Caco-2 (cell line): ENCODE measurements at regions of chr5 and their contacts with region 1.

Region 1: GRCh38 chr5:73201547-73202513 is 28.8 kb downstream of the TMEM174 start:
- DNase-seq: peak; percentile 87 to 94
- H3K4me3 ChIP-seq: peak overlapping the region; percentile 37
- H3K4me3 Mint-ChIP-seq: peak overlapping the region; percentile 81
- H3K27ac Mint-ChIP-seq: peak overlapping the region; percentile 39
- H3K4me1 ChIP-seq: peaks cover 11% of the 10 kb centered on the region; the same call in 1 of the 2 replicates
- H3K4me1 Mint-ChIP-seq: peaks cover 21% of the 10 kb centered on the region
- H3K27me3 ChIP-seq: no peaks in the 10 kb centered on the region
- H3K27me3 Mint-ChIP-seq: peaks cover 5% of the 10 kb centered on the region
- CTCF ChIP-seq: peak; percentile 94 to 97

Region 2: GRCh38 chr5:72920690-72921502 is 280.9 kb before region 1 on chr5:
- CTCF ChIA-PET with region 1: interaction called, 3 read pairs
- POLR2A ChIA-PET with region 1: no interaction called
- intact Hi-C with region 1: loop called (anchors 5 kb)
- DNase-seq: peak in 1 of 2 experiments; percentile 11
- H3K4me3 ChIP-seq: no peak overlapping the region
- H3K4me3 Mint-ChIP-seq: no peak overlapping the region
- H3K27ac Mint-ChIP-seq: no peak overlapping the region
- H3K4me1 ChIP-seq: no peaks in the 10 kb centered on the region
- H3K4me1 Mint-ChIP-seq: no peaks in the 10 kb centered on the region
- H3K27me3 ChIP-seq: no peaks in the 10 kb centered on the region
- H3K27me3 Mint-ChIP-seq: no peaks in the 10 kb centered on the region
- CTCF ChIP-seq: peak; percentile 25 to 28

Region 3: DNA sequence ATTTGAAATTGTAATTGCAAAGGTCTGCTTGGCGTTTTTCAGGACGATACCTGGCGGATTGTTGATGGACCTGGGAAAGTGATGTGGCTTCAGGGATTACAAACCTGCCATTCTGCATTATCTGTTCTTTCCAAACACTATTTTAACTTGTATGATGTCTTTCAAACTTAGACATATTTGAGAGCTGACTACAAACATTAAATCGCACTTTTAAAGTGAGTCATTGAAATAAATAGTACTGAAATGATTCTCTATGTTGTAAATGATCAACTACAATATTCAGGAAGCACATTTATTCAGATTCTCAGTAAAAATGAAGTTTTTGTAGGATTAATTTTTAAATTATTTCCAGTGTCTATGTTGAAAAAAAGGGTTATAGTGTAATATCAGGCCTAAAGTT is 113.8 kb before region 1 on chr5:
- CTCF ChIA-PET with region 1: interaction called, 22 read pairs
- POLR2A ChIA-PET with region 1: no interaction called
- intact Hi-C with region 1: loop called (anchors 1 kb)
- DNase-seq: no peak
- H3K4me3 ChIP-seq: no peak overlapping the region
- H3K4me3 Mint-ChIP-seq: no peak overlapping the region
- H3K27ac Mint-ChIP-seq: no peak overlapping the region
- H3K4me1 ChIP-seq: no peaks in the 10 kb centered on the region
- H3K4me1 Mint-ChIP-seq: no peaks in the 10 kb centered on the region
- H3K27me3 ChIP-seq: no peaks in the 10 kb centered on the region
- H3K27me3 Mint-ChIP-seq: no peaks in the 10 kb centered on the region
- CTCF ChIP-seq: no peak

Region 4: GRCh38 chr5:73135429-73136054 is 66.3 kb before region 1 on chr5:
- CTCF ChIA-PET with region 1: interaction called, 3 read pairs
- POLR2A ChIA-PET with region 1: no interaction called
- intact Hi-C with region 1: loop called (anchors 5 kb)
- DNase-seq: no peak
- H3K4me3 ChIP-seq: no peak overlapping the region
- H3K4me3 Mint-ChIP-seq: no peak overlapping the region
- H3K27ac Mint-ChIP-seq: no peak overlapping the region
- H3K4me1 ChIP-seq: peaks cover 18% of the 10 kb centered on the region
- H3K4me1 Mint-ChIP-seq: peaks cover 13% of the 10 kb centered on the region
- H3K27me3 ChIP-seq: no peaks in the 10 kb centered on the region
- H3K27me3 Mint-ChIP-seq: peaks cover 3% of the 10 kb centered on the region
- CTCF ChIP-seq: peak; percentile 32 to 54

Region 5: GRCh38 chr5:73189871-73190376 is 11.9 kb before region 1 on chr5:
- CTCF ChIA-PET with region 1: interaction called, 13 read pairs
- POLR2A ChIA-PET with region 1: interaction called, 3 read pairs
- intact Hi-C with region 1: no loop called
- DNase-seq: peak in 1 of 2 experiments; percentile 23
- H3K4me3 ChIP-seq: no peak overlapping the region
- H3K4me3 Mint-ChIP-seq: no peak overlapping the region
- H3K27ac Mint-ChIP-seq: no peak overlapping the region
- H3K4me1 ChIP-seq: peaks cover 10% of the 10 kb centered on the region
- H3K4me1 Mint-ChIP-seq: peaks cover 16% of the 10 kb centered on the region
- H3K27me3 ChIP-seq: no peaks in the 10 kb centered on the region
- H3K27me3 Mint-ChIP-seq: no peaks in the 10 kb centered on the region
- CTCF ChIP-seq: no peak

Region 6: DNA sequence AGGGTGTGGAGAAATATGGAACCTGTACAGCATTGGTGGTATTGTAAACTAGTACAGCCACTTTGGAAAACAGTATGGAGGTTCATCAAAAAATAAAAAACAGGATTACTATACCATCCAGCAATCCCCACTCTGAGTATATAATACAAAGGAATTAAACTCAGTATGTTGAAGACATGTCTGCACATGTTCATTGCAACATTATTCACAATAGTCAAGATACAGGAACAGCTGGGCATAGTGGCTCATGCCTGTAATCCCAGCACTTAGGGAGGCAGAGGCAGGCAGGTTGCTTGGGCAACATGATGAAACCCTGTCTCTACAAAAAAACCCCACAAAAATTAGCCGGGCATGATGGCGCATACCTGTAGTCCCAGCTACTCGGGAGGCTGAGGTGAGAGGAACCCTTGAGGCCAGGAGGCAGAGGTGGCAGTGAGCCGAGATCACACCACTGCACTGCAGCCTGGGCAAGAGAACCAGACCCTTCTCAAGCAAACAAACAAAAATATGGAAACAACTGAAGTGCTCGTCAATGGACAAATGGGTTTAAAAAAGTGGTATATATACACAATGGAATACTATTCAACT is 34.8 kb after region 1 on chr5:
- CTCF ChIA-PET with region 1: no interaction called
- POLR2A ChIA-PET with region 1: no interaction called
- intact Hi-C with region 1: no loop called
- DNase-seq: no peak
- H3K4me3 ChIP-seq: no peak overlapping the region
- H3K4me3 Mint-ChIP-seq: no peak overlapping the region
- H3K27ac Mint-ChIP-seq: no peak overlapping the region
- H3K4me1 ChIP-seq: no peaks in the 10 kb centered on the region
- H3K4me1 Mint-ChIP-seq: no peaks in the 10 kb centered on the region
- H3K27me3 ChIP-seq: no peaks in the 10 kb centered on the region
- H3K27me3 Mint-ChIP-seq: no peaks in the 10 kb centered on the region
- CTCF ChIP-seq: no peak

Region 7: DNA sequence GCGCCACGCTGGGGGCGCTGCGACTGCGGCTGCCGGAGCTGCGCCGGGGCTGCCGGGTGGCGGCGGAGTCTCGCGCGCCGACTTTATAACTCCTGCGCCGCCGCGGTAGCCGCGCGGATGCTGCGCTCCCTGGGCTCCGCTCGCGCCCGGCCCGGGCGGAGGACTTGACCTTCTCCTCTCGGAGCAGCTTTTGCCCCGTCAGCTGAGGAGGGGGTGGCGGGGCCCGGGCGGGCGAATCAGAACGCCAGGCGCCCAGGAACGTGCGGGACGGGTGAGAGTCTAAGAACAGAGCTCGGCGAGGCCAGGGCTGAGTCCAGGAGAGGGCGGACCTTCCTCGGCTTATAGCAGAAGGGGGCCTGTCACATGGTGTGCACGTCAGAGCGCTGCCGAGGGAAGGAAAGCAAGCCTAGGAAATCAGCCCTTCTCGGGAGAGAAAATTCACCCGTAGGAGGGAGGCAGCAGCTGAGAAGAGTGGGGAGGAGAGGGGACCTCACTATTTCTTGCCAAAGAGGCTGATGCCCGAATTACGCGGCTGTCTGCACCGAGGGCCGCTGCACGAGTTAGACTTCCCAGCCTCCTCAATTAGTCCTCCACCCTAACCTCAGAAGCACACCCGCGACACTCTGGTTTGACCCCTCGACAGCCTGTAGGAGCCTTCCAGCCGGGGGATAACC is 246.8 kb after region 1 on chr5 and contains the start of gene FOXD1:
- CTCF ChIA-PET with region 1: interaction called, 3 read pairs
- POLR2A ChIA-PET with region 1: no interaction called
- intact Hi-C with region 1: loop called (anchors 5 kb)
- DNase-seq: peak; percentile 78 to 82
- H3K4me3 ChIP-seq: peak within 1 kb of the TSS; percentile 68
- H3K4me3 Mint-ChIP-seq: peak within 1 kb of the TSS; percentile 81
- H3K27ac Mint-ChIP-seq: peak within 1 kb of the TSS; percentile 32
- H3K4me1 ChIP-seq: peaks cover 11% of the 10 kb centered on the region
- H3K4me1 Mint-ChIP-seq: no peaks in the 10 kb centered on the region
- H3K27me3 ChIP-seq: peaks cover 5% of the 10 kb centered on the region
- H3K27me3 Mint-ChIP-seq: peaks cover 25% of the 10 kb centered on the region
- CTCF ChIP-seq: no peak
- total RNA-seq, gene FOXD1: 2.8 and 3.1 TPM in 2 replicates